OCI-LY7 (cell line): ENCODE measurements at regions of chr7 and their contacts with region 1.

Region 1: GRCh38 chr7:77247206-77247850 is 47.7 kb upstream of the FGL2 start:
- DNase-seq: peak; percentile 81
- H3K4me3 ChIP-seq: no peak overlapping the region
- H3K27ac ChIP-seq: no peak overlapping the region
- H3K4me1 ChIP-seq: no peaks in the 10 kb centered on the region
- CTCF ChIP-seq: peak; percentile 94

Region 2: DNA sequence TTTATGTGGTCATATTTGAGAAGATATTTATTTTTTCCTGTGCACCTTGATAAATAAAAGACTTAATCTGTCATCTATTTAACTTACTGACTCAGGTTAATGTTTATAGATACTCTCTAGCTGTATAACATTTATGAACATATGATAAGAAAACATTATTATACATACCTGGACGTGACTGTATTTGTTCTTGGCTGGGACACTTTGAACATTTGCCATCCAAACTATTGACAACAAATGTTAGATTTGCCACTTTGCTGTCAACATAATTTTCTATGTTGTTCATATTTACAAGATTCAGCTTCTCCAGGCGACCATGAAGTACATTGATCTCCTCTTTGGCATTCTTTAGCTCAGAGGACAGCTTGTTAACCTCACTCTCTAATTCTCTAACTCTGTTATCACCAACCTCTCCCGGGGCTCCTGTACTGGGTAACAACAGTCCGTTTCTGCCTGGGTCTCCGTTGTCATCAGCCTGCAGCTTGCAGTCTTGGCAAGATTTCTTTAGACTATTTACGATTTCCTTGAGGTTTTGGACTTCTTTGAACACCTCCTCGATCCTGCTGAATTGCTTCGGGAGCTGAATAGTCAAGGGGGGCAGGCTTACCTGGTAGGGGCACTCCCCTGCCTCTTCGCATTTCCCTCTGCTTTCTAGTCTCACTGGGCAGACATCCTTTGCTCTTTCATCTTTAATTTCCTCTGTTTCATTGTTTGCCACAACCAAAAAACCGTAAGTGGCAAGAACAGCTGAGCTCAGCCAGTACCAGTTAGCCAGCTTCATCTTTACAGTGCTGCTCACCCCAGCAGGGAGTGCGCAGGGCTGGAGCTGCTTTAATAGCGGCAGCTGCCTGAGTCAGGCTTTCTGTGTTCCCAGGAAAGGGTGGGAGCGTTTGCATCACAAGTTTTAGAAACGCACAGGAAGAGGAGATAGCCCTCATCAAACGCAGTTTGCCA is 48.0 kb before region 1 on chr7 and contains the start of gene FGL2:
- CTCF ChIA-PET with region 1: no interaction called
- POLR2A ChIA-PET with region 1: interaction called, 5 read pairs
- intact Hi-C with region 1: loop called (anchors 5 kb)
- DNase-seq: peak; percentile 32
- H3K4me3 ChIP-seq: peak within 1 kb of the TSS; percentile 59
- H3K27ac ChIP-seq: peak within 1 kb of the TSS; percentile 34
- H3K4me1 ChIP-seq: peaks cover 33% of the 10 kb centered on the region
- CTCF ChIP-seq: no peak
- total RNA-seq, gene FGL2: 0.06 and 0.13 TPM in 2 replicates

Region 3: DNA sequence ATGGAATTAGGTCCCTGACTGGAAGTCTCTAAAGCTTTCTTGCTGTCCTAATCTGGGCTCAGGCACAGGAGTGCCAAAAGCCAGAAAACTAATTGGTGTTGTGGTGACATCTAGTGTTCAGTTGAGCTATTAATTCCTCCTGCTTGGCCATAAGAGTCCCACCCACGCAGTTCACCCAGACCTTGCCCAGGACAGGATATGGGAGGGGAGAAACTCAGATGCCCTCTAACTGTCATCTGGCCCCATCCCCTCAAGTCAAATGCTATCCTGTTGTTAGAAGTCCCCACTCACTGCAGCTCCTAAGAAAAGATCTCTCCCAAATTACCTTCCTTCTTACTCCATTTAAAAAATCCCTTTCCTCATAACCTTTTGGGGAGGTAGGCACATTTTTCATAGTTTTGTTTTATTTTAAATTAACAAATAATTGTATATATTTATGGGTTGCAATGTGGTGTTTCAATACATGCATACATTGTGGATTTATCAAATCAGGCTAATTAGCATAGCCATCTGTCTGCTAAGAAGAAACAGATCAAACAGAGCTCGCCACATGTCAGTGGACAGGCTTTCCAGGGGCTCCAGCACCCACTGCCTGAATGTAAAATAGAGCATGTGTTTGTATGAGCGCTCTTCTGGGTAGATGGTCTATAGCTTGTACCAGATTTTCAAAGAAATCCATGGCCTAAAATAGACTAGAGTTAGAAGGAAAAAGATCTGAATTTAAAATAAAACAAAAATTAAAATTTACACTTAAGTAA is 84.8 kb after region 1 on chr7:
- CTCF ChIA-PET with region 1: interaction called, 5 read pairs
- POLR2A ChIA-PET with region 1: interaction called, 3 read pairs
- intact Hi-C with region 1: loop called (anchors 2 kb)
- DNase-seq: peak; percentile 81
- H3K4me3 ChIP-seq: no peak overlapping the region
- H3K27ac ChIP-seq: no peak overlapping the region
- H3K4me1 ChIP-seq: peaks cover 10% of the 10 kb centered on the region
- CTCF ChIP-seq: peak; percentile 83

Region 4: GRCh38 chr7:77570330-77571011 is 323.1 kb after region 1 on chr7:
- CTCF ChIA-PET with region 1: no interaction called
- POLR2A ChIA-PET with region 1: no interaction called
- intact Hi-C with region 1: no loop called
- DNase-seq: no peak
- H3K4me3 ChIP-seq: no peak overlapping the region
- H3K27ac ChIP-seq: no peak overlapping the region
- H3K4me1 ChIP-seq: no peaks in the 10 kb centered on the region
- CTCF ChIP-seq: no peak